Sigmoid colon (tissue), 7 donors: ENCODE measurements at regions of chr12 and their contacts with region 1.

Region 1: DNA sequence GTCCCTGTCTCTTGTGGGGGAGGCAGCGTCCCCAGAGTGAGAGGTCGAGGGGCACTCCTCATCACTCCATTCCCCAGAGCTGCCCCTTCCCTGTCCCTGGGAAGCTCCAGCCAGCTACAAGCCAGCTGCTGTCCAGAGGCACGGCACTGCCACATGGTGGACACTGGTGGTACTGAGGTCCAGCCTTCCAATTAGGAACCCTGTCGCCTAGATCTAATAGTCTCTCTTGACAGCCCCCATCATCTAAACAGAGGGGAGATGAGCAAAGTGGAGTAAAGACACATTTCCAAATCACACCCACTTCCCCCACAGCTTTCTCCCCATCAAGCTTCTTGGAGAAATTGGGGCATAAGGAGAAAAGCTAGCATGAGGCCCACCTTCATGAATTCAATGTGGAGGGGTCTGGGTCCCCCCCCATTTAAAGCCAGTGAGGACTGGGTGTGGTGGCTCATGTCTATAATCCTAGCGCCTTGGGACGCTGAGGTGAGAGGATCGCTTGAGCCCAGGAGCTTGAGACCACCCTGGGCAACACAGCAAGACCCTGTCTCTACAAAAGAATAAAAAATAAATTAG is 2.1 kb upstream of the INHBE start:
- DNase-seq: peak; percentile 89
- H3K4me3 ChIP-seq: no peak overlapping the region
- H3K27ac ChIP-seq: peak overlapping the region in 3 of 4 donors; percentile 55 to 71 (median 62)
- H3K4me1 ChIP-seq: peaks cover 0 to 21% (median 10%) of the 10 kb centered on the region in 4 donors
- H3K27me3 ChIP-seq: peaks cover 0 to 7% (median 0%) of the 10 kb centered on the region in 3 donors
- CTCF ChIP-seq: peak; percentile 67 to 95 (median 92)
- EP300 ChIP-seq: no peak
- POLR2A ChIP-seq: no peak

Region 2: DNA sequence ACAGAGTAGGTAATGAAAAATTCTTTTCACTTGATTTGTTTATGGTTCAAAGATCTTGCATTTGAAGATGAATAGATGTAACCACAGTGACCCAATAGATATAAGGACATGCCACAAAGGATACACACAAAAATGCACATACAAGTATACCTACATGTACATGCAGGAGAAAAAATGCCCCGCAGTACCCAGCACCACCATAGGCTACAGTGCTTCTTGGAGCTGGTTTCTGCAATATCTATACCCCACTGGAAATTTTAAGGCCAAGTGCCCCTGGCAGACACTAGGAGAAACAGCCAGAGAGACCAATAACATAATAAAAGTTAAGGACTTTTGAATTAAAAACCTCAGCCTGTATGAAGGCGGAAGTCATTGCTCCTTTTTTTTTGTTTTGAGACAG is 189.9 kb before region 1 on chr12:
- intact Hi-C with region 1: loop called (anchors 1 kb)
- DNase-seq: no peak
- H3K4me3 ChIP-seq: no peak overlapping the region
- H3K27ac ChIP-seq: no peak overlapping the region
- H3K4me1 ChIP-seq: peaks cover 0 to 5% (median 0%) of the 10 kb centered on the region in 4 donors
- H3K27me3 ChIP-seq: no peaks in the 10 kb centered on the region
- CTCF ChIP-seq: no peak
- EP300 ChIP-seq: no peak
- POLR2A ChIP-seq: no peak

Region 3: DNA sequence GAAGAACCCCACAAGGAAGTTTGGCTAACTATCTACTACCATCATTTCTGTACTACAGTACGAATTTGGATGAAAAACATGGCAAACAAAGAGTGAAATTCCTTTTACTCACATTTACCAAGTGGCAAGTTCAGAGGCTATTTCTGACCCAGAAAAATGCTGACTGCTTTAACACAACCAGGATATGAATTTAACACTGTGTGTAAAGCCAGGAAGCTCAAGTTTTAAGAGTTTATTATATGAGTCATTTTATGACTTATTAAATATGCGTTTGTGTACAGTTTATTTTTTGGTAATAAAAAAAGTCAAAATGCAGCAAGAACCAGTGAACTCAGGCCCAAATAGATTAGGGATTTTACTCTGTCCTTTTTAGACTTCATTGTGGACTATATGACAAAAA is 143.6 kb before region 1 on chr12:
- intact Hi-C with region 1: loop called (anchors 2 kb)
- DNase-seq: no peak
- H3K4me3 ChIP-seq: no peak overlapping the region
- H3K27ac ChIP-seq: peak overlapping the region in 1 of 4 donors; percentile 38
- H3K4me1 ChIP-seq: peaks cover 0 to 4% (median 2%) of the 10 kb centered on the region in 4 donors
- H3K27me3 ChIP-seq: no peaks in the 10 kb centered on the region
- CTCF ChIP-seq: no peak
- EP300 ChIP-seq: no peak
- POLR2A ChIP-seq: no peak

Region 4: DNA sequence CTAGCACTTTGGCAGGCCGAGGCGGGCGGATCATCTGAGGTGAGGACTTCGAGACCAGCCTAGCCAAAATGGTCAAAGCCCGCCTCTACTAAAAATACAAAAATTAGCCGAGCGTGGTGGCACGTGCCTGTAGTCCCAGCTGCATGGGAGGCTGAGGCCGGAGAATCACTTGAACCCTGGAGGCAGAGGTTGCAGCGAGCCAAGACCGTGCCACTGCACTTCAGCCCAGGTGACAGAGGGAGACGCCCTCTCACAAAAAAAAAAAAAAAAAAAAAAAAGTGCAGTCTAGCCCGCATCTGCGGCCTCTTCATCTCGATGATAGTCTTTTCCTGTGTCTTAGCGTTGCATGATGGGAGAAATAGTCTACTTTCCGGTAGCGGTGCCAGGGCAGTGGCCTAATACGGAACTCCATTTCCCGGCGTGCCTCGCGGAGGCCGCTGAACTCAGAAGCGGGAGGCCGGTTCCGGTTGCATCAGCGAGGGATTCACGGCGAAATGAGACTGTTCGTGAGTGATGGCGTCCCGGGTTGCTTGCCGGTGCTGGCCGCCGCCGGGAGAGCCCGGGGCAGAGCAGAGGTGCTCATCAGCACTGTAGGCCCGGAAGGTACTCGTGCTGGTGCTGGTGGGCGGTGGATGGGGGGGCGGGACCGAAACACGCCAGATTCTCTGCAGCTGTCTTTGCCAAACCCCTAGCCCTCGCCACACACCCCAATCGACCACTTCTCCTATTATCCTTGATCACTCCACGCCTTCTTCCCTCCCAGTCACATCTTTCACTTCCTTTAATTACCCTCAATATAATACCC is 34.8 kb after region 1 on chr12 and contains the start of gene MARS1:
- intact Hi-C with region 1: no loop called
- DNase-seq: peak; percentile 98
- H3K4me3 ChIP-seq: peak within 1 kb of the TSS; percentile 80 to 97 (median 92)
- H3K27ac ChIP-seq: peak within 1 kb of the TSS; percentile 81 to 87 (median 86)
- H3K4me1 ChIP-seq: peaks cover 0 to 22% (median 13%) of the 10 kb centered on the region in 4 donors
- H3K27me3 ChIP-seq: no peaks in the 10 kb centered on the region
- CTCF ChIP-seq: no peak
- EP300 ChIP-seq: peak in 1 of 4 donors; percentile 83
- POLR2A ChIP-seq: peak; percentile 47 to 65
- total RNA-seq, gene MARS1: 46.6 to 56.3 (median 53.2) TPM